PC-3 (cell line): ENCODE measurements at regions of chr1 and their contacts with region 1.

Region 1: DNA sequence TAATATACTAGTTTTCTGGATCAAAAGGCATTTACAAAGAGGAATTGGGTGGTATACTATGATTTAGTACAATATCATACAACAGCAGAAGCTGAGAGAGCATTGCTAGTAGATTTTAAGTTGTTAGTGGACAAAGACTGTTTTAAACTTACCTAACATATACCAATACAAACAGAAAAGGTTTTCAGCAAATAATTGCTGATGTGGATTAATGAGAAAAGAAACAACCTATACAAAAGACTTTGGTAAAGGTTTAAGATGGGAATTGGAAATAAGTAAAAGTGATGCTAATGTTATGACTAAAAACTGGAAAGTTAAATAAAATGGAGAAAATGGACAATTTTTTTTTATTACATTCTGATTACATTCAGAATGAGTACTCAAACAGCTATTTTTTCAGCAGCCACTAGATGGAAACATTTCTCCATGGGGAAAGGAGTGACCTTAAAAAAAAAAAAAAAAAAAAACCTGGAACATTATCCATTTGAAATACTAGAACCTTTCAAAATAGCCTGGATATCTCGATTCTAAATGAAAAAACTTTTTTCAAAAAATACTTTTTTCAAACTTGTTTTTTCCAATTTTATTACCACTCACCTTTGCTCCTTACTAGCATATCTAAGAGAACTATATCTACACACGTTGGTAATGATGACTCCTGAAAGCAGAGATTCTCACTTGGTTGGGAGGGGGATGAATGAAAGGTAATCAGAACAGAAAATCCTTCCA is 55.4 kb downstream of the EPRS1 start:
- DNase-seq: peak; percentile 80
- ATAC-seq: peak; percentile 55
- H3K4me3 ChIP-seq: no peak overlapping the region
- H3K27ac ChIP-seq: no peak overlapping the region
- H3K4me1 ChIP-seq: no peaks in the 10 kb centered on the region
- H3K27me3 ChIP-seq: no peaks in the 10 kb centered on the region
- CTCF ChIP-seq: peak; percentile 95

Region 2: GRCh38 chr1:219365451-219365850 is 625.5 kb before region 1 on chr1:
- CTCF ChIA-PET with region 1: interaction called, 14 read pairs
- POLR2A ChIA-PET with region 1: no interaction called
- intact Hi-C with region 1: no loop called
- DNase-seq: no peak
- ATAC-seq: no peak
- H3K4me3 ChIP-seq: no peak overlapping the region
- H3K27ac ChIP-seq: no peak overlapping the region
- H3K4me1 ChIP-seq: peaks cover 6% of the 10 kb centered on the region; the same call in 1 of the 2 replicates
- H3K27me3 ChIP-seq: no peaks in the 10 kb centered on the region
- CTCF ChIP-seq: no peak

Region 3: GRCh38 chr1:219824338-219824737 is 166.6 kb before region 1 on chr1:
- CTCF ChIA-PET with region 1: no interaction called
- POLR2A ChIA-PET with region 1: no interaction called
- intact Hi-C with region 1: no loop called
- DNase-seq: no peak
- ATAC-seq: no peak
- H3K4me3 ChIP-seq: no peak overlapping the region
- H3K27ac ChIP-seq: no peak overlapping the region
- H3K4me1 ChIP-seq: no peaks in the 10 kb centered on the region
- H3K27me3 ChIP-seq: peaks cover 8% of the 10 kb centered on the region; the same call in 1 of the 2 replicates
- CTCF ChIP-seq: no peak

Region 4: GRCh38 chr1:219954052-219954451 is 36.9 kb before region 1 on chr1:
- CTCF ChIA-PET with region 1: interaction called, 17 read pairs
- POLR2A ChIA-PET with region 1: no interaction called
- intact Hi-C with region 1: no loop called
- DNase-seq: no peak
- ATAC-seq: peak; percentile 21; the same call in 1 of the 2 replicates
- H3K4me3 ChIP-seq: no peak overlapping the region
- H3K27ac ChIP-seq: no peak overlapping the region
- H3K4me1 ChIP-seq: peaks cover 6% of the 10 kb centered on the region
- H3K27me3 ChIP-seq: peaks cover 17% of the 10 kb centered on the region
- CTCF ChIP-seq: no peak

Region 5: DNA sequence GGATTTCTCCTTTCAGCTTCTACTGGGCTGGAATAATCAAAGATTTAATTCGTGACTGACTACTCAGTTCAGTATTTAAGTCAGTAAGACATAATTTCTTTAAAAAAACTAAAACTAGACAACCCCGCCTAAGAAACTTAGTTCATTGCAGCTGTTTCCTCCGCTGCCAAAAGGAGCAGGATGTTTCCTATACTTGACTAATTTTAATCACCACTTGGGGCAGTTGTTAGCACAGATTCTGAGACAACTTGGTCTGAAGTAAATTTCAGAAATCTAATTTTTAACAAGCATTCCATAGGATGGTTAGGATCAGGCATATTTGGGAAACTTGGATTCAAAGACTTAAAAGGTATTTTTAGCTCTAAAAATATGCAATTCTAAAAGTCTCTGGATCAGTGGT is 21.3 kb after region 1 on chr1:
- CTCF ChIA-PET with region 1: no interaction called
- POLR2A ChIA-PET with region 1: interaction called, 21 read pairs
- intact Hi-C with region 1: no loop called
- DNase-seq: peak; percentile 25
- ATAC-seq: peak; percentile 46
- H3K4me3 ChIP-seq: no peak overlapping the region
- H3K27ac ChIP-seq: no peak overlapping the region
- H3K4me1 ChIP-seq: no peaks in the 10 kb centered on the region
- H3K27me3 ChIP-seq: no peaks in the 10 kb centered on the region
- CTCF ChIP-seq: peak; percentile 54; the same call in 1 of the 2 replicates

Region 6: GRCh38 chr1:220089650-220090556 is 99.0 kb after region 1 on chr1 and contains the start of gene BPNT1:
- CTCF ChIA-PET with region 1: interaction called, 5 read pairs
- POLR2A ChIA-PET with region 1: no interaction called
- intact Hi-C with region 1: loop called (anchors 5 kb)
- DNase-seq: peak; percentile 100
- ATAC-seq: peak; percentile 74
- H3K4me3 ChIP-seq: peak within 1 kb of the TSS; percentile 92
- H3K27ac ChIP-seq: 0 out of 2 replicates have a peak within 1 kb of the TSS, but pooled peaks have one; percentile 3
- H3K4me1 ChIP-seq: peaks cover 9% of the 10 kb centered on the region; the same call in 1 of the 2 replicates
- H3K27me3 ChIP-seq: no peaks in the 10 kb centered on the region
- CTCF ChIP-seq: no peak; the same call in 1 of the 2 replicates
- total RNA-seq, gene BPNT1: 40.7 and 49.7 TPM in 2 replicates